Activated CD4-positive, alpha-beta T cell treated with anti-CD3 and anti-CD28 coated beads, Interleukin-2, amount 10 ng/mL, durations not matched to agents 24 days and 14 days (primary cell): ENCODE measurements at regions of chr14 and their contacts with region 1.

Region 1: GRCh38 chr14:72516936-72517700 is 376.8 kb downstream of the DPF3 start:
- DNase-seq: peak; percentile 94
- H3K4me3 Mint-ChIP-seq: peak overlapping the region; percentile 18
- H3K27ac Mint-ChIP-seq: peak overlapping the region; percentile 6
- H3K4me1 Mint-ChIP-seq: peaks cover 78% of the 10 kb centered on the region
- H3K27me3 Mint-ChIP-seq: peaks cover under 1% of the 10 kb centered on the region

Region 2: DNA sequence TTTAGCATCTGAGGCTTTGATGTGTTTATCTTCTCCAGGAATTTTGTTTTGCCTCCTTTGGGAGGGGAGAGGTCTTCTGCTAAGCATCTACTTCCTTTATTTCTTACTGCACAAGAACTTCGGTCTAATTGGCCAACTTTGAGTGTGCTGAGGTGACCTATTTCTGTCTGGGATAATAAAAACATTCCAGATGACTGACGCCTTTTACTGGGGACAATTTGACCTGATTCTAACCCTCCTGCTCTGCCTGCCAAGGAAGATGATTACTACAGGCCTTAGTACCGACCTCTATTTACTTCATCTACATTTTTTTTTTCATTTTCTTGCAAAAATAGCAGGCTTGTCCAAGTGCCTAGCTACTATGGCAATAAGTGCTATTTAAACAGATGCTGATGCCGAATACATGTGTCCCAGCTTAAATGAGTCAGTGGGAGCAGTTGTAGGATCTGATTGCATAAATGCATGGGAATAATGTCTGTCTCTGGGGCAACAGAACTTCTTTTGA is 330.7 kb before region 1 on chr14:
- intact Hi-C with region 1: no loop called
- DNase-seq: no peak
- H3K4me3 Mint-ChIP-seq: no peak overlapping the region
- H3K27ac Mint-ChIP-seq: no peak overlapping the region
- H3K4me1 Mint-ChIP-seq: no peaks in the 10 kb centered on the region
- H3K27me3 Mint-ChIP-seq: peaks cover 4% of the 10 kb centered on the region

Region 3: GRCh38 chr14:72476657-72477499 is 40.2 kb before region 1 on chr14:
- intact Hi-C with region 1: loop called (anchors 1 kb)
- DNase-seq: peak; percentile 95
- H3K4me3 Mint-ChIP-seq: peak overlapping the region; percentile 61
- H3K27ac Mint-ChIP-seq: peak overlapping the region; percentile 83
- H3K4me1 Mint-ChIP-seq: peaks cover 65% of the 10 kb centered on the region
- H3K27me3 Mint-ChIP-seq: no peaks in the 10 kb centered on the region

Region 4: DNA sequence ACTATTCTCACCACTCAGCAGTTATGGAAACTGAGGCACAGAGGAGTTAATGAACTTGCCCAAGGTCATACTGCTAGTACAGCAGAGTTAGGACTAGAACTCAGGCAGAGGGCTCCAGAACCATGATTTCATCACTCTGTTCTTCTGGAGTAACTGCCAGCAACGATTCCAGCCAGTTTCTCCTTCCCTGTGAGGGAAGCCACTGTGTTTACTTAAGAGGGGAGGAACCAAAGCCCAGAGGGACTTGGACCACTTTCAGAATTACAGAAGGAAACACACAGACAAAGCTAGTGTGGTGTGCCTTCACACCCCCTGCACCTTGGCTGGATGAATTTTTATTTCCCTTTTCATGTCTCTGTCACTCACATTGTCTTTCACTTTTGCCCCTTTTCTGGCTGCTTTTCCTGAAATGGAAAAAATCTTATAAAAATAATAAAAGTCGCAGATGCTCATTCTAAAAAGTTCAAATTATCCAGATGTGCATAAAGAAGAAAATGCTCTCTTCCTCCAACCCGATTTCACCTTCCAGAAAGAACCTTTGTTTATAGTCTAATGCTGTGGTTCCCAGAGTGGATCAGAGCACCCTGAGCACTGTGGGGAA is 21.4 kb before region 1 on chr14:
- intact Hi-C with region 1: no loop called
- DNase-seq: no peak
- H3K4me3 Mint-ChIP-seq: no peak overlapping the region
- H3K27ac Mint-ChIP-seq: no peak overlapping the region
- H3K4me1 Mint-ChIP-seq: peaks cover 4% of the 10 kb centered on the region
- H3K27me3 Mint-ChIP-seq: peaks cover 23% of the 10 kb centered on the region

Region 5: GRCh38 chr14:72594099-72594901 is 77.2 kb after region 1 on chr14:
- intact Hi-C with region 1: loop called (anchors 1 kb)
- DNase-seq: peak; percentile 90
- H3K4me3 Mint-ChIP-seq: peak overlapping the region; percentile 74
- H3K27ac Mint-ChIP-seq: peak overlapping the region; percentile 51
- H3K4me1 Mint-ChIP-seq: peaks cover 47% of the 10 kb centered on the region
- H3K27me3 Mint-ChIP-seq: peaks cover 24% of the 10 kb centered on the region

Region 6: DNA sequence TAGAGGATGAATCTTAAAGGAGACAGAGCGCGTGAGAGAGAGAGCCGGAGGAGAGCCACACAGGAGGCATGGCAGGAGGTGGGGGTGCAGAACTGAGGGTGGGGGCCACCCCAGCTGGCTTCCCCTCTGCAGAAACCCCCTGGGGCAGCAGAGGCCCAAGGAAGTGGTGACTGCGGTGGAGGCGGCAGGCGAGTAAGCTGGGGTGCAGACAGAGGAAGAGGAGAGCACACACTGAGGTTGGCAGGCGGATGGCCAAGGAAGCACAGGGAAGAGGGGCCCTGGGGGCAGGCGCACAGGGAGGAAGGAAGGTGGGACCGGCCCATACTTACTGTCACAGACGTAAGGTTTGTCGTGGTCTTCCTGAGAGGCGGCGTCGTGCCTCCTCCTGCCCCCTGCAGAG is 197.0 kb after region 1 on chr14:
- intact Hi-C with region 1: loop called (anchors 5 kb)
- DNase-seq: peak; percentile 84
- H3K4me3 Mint-ChIP-seq: peak overlapping the region; percentile 73
- H3K27ac Mint-ChIP-seq: peak overlapping the region; percentile 73
- H3K4me1 Mint-ChIP-seq: peaks cover 43% of the 10 kb centered on the region
- H3K27me3 Mint-ChIP-seq: peaks cover 7% of the 10 kb centered on the region

Region 7: GRCh38 chr14:72893636-72894321 is 376.7 kb after region 1 on chr14 and contains the start of gene DPF3:
- intact Hi-C with region 1: loop called (anchors 1 kb)
- DNase-seq: peak; percentile 98
- H3K4me3 Mint-ChIP-seq: peak within 1 kb of the TSS; percentile 90
- H3K27ac Mint-ChIP-seq: peak within 1 kb of the TSS; percentile 27
- H3K4me1 Mint-ChIP-seq: peaks cover 26% of the 10 kb centered on the region
- H3K27me3 Mint-ChIP-seq: peaks cover 52% of the 10 kb centered on the region
- total RNA-seq, gene DPF3: 1.5 and 2.8 TPM in 2 replicates

Region 8: GRCh38 chr14:72926292-72927028 is 409.3 kb after region 1 on chr14 and contains the start of gene DCAF4:
- intact Hi-C with region 1: loop called (anchors 1 kb)
- DNase-seq: peak; percentile 98
- H3K4me3 Mint-ChIP-seq: peak within 1 kb of the TSS; percentile 87
- H3K27ac Mint-ChIP-seq: peak within 1 kb of the TSS; percentile 93
- H3K4me1 Mint-ChIP-seq: peaks cover 11% of the 10 kb centered on the region
- H3K27me3 Mint-ChIP-seq: peaks cover 13% of the 10 kb centered on the region
- total RNA-seq, gene DCAF4: 20.2 and 21.6 TPM in 2 replicates

Region 9: GRCh38 chr14:73290279-73290678 is 773.2 kb after region 1 on chr14:
- intact Hi-C with region 1: loop called (anchors 5 kb)
- DNase-seq: no peak
- H3K4me3 Mint-ChIP-seq: peak overlapping the region; percentile 44
- H3K27ac Mint-ChIP-seq: peak overlapping the region; percentile 78
- H3K4me1 Mint-ChIP-seq: peaks cover 36% of the 10 kb centered on the region
- H3K27me3 Mint-ChIP-seq: no peaks in the 10 kb centered on the region